ENCODE measurements at regions of chr5 and their contacts with region 1.

Region 1: GRCh38 chr5:134436523-134437339 is 25.1 kb upstream of the CDKN2AIPNL start:
- DNase-seq: peak; percentile 46
- ATAC-seq: peak; percentile 96
- H3K4me3 ChIP-seq: no peak overlapping the region
- H3K27ac ChIP-seq: peak overlapping the region; percentile 24; the same call in 1 of the 2 replicates
- H3K4me1 ChIP-seq: peaks cover 18% of the 10 kb centered on the region
- H3K27me3 ChIP-seq: no peaks in the 10 kb centered on the region
- CTCF ChIP-seq: no peak
- EP300 ChIP-seq: peak in 1 of 2 experiments; percentile 48; a peak in 1 of 4 replicates
- POLR2A ChIP-seq: no peak
- RAD21 ChIP-seq: no peak

Region 2: GRCh38 chr5:134209477-134210240 is 227.1 kb before region 1 on chr5:
- CTCF ChIA-PET with region 1: no interaction called
- POLR2A ChIA-PET with region 1: no interaction called
- RAD21 ChIA-PET with region 1: no interaction called
- SMC1A ChIA-PET with region 1: no interaction called
- in situ Hi-C with region 1: no loop called
- intact Hi-C with region 1: no loop called
- DNase-seq: no peak
- ATAC-seq: no peak
- H3K4me3 ChIP-seq: no peak overlapping the region; the same call in 1 of the 2 replicates
- H3K27ac ChIP-seq: no peak overlapping the region
- H3K4me1 ChIP-seq: no peaks in the 10 kb centered on the region
- H3K27me3 ChIP-seq: no peaks in the 10 kb centered on the region
- CTCF ChIP-seq: no peak
- EP300 ChIP-seq: no peak
- POLR2A ChIP-seq: no peak
- RAD21 ChIP-seq: no peak

Region 3: DNA sequence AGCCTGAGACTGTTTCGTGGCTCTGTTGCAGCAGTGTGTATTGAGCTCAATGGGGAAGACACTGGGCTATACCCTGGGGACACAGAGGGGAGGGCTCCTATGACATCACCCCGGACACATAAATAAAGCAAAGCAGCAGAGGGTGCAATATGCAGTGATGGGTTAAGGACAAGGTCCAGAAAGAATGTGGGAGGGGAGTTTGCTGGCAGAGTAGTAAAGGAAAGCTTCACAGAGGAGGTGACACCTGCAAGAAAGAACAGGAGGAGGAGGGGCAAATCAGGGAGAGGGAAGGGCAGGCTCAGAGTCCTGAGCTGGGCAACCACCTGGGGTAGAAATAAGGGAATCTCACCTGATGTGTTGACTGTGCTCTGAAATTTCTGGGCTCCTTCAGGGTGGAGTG is 10.2 kb after region 1 on chr5:
- CTCF ChIA-PET with region 1: interaction called, 5 read pairs
- POLR2A ChIA-PET with region 1: interaction called, 3 read pairs
- RAD21 ChIA-PET with region 1: interaction called, 11 read pairs
- SMC1A ChIA-PET with region 1: interaction called, 18 read pairs
- in situ Hi-C with region 1: no loop called
- intact Hi-C with region 1: no loop called
- DNase-seq: no peak
- ATAC-seq: peak; percentile 95
- H3K4me3 ChIP-seq: no peak overlapping the region
- H3K27ac ChIP-seq: no peak overlapping the region
- H3K4me1 ChIP-seq: peaks cover 4% of the 10 kb centered on the region; the same call in 1 of the 2 replicates
- H3K27me3 ChIP-seq: no peaks in the 10 kb centered on the region
- CTCF ChIP-seq: no peak; a peak in 1 of 6 replicates
- EP300 ChIP-seq: no peak
- POLR2A ChIP-seq: no peak
- RAD21 ChIP-seq: no peak